ENCODE measurements at regions of chr1 and their contacts with region 1.

Region 1: GRCh38 chr1:91803847-91804545 is 82.0 kb downstream of the TGFBR3 start:
- DNase-seq: peak; percentile 87 to 92 (median 89)
- H3K4me3 ChIP-seq: peak overlapping the region; percentile 27 to 61
- H3K4me3 Mint-ChIP-seq: peak overlapping the region; percentile 73 to 90 (median 80)
- H3K27ac ChIP-seq: peak overlapping the region; percentile 98
- H3K27ac Mint-ChIP-seq: peak overlapping the region; percentile 97 to 100 (median 100)
- H3K4me1 ChIP-seq: peaks cover 49% of the 10 kb centered on the region
- H3K4me1 Mint-ChIP-seq: peaks cover 44 to 66% (median 51%) of the 10 kb centered on the region in 4 donors
- H3K27me3 ChIP-seq: no peaks in the 10 kb centered on the region
- H3K27me3 Mint-ChIP-seq: no peaks in the 10 kb centered on the region

Region 2: GRCh38 chr1:91021686-91022517 is 782.1 kb before region 1 on chr1 and contains the start of gene ZNF644:
- CTCF ChIA-PET with region 1: no interaction called
- POLR2A ChIA-PET with region 1: no interaction called
- intact Hi-C with region 1: loop called (anchors 5 kb)
- DNase-seq: peak; percentile 92 to 98 (median 94)
- H3K4me3 ChIP-seq: peak within 1 kb of the TSS; percentile 57 to 88
- H3K4me3 Mint-ChIP-seq: peak within 1 kb of the TSS; percentile 88 to 96 (median 95)
- H3K27ac ChIP-seq: peak within 1 kb of the TSS; percentile 99
- H3K27ac Mint-ChIP-seq: peak within 1 kb of the TSS; percentile 84 to 99 (median 98)
- H3K4me1 ChIP-seq: peaks cover 56% of the 10 kb centered on the region
- H3K4me1 Mint-ChIP-seq: peaks cover 35 to 72% (median 54%) of the 10 kb centered on the region in 4 donors
- H3K27me3 ChIP-seq: no peaks in the 10 kb centered on the region
- H3K27me3 Mint-ChIP-seq: no peaks in the 10 kb centered on the region
- total RNA-seq, gene ZNF644: 72.7 to 76.3 TPM

Region 3: GRCh38 chr1:91500756-91501522 is 303.1 kb before region 1 on chr1 and contains the start of gene CDC7:
- CTCF ChIA-PET with region 1: no interaction called
- POLR2A ChIA-PET with region 1: no interaction called
- intact Hi-C with region 1: loop called (anchors 2 kb)
- DNase-seq: peak; percentile 69 to 87 (median 81)
- H3K4me3 ChIP-seq: peak within 1 kb of the TSS; percentile 62 to 81
- H3K4me3 Mint-ChIP-seq: no peak within 1 kb of the TSS
- H3K27ac ChIP-seq: peak within 1 kb of the TSS; percentile 75
- H3K27ac Mint-ChIP-seq: no peak within 1 kb of the TSS
- H3K4me1 ChIP-seq: peaks cover 31% of the 10 kb centered on the region
- H3K4me1 Mint-ChIP-seq: peaks cover 18 to 25% (median 21%) of the 10 kb centered on the region in 4 donors
- H3K27me3 ChIP-seq: no peaks in the 10 kb centered on the region
- H3K27me3 Mint-ChIP-seq: no peaks in the 10 kb centered on the region
- total RNA-seq, gene CDC7: 4.7 to 6.0 TPM

Region 4: GRCh38 chr1:91555821-91556531 is 248.0 kb before region 1 on chr1:
- CTCF ChIA-PET with region 1: no interaction called
- POLR2A ChIA-PET with region 1: interaction called, 6 read pairs
- intact Hi-C with region 1: loop called (anchors 1 kb)
- DNase-seq: peak; percentile 85 to 93 (median 88)
- H3K4me3 ChIP-seq: peak overlapping the region in 1 of 2 donors; percentile 19
- H3K4me3 Mint-ChIP-seq: peak overlapping the region in 7 of 8 donors; percentile 29 to 74 (median 65)
- H3K27ac ChIP-seq: peak overlapping the region; percentile 75
- H3K27ac Mint-ChIP-seq: peak overlapping the region; percentile 88 to 99 (median 94)
- H3K4me1 ChIP-seq: peaks cover 98% of the 10 kb centered on the region
- H3K4me1 Mint-ChIP-seq: peaks cover 65 to 97% (median 82%) of the 10 kb centered on the region in 4 donors
- H3K27me3 ChIP-seq: no peaks in the 10 kb centered on the region
- H3K27me3 Mint-ChIP-seq: no peaks in the 10 kb centered on the region

Region 5: DNA sequence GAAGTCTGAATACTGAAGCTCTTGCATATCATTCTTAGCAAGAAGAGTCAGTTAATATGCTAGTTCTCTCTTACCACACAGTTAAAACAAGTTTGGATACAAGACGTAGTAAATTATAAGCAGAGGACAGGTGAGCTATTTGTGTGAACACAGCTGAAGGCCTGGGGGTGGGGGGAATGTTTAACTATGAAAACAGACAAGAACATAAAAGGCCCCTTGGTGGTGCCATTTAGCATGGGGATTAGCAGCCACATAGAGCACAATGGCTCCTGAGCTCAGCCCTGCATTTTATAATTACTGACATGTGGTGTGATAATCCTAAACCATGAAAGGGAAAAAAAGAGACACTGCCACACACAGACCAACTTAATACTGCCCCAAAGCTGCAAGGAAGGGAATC is 12.9 kb before region 1 on chr1:
- CTCF ChIA-PET with region 1: interaction called, 8 read pairs
- POLR2A ChIA-PET with region 1: interaction called, 22 read pairs
- intact Hi-C with region 1: loop called (anchors 1 kb)
- DNase-seq: no peak
- H3K4me3 ChIP-seq: no peak overlapping the region
- H3K4me3 Mint-ChIP-seq: peak overlapping the region in 2 of 8 donors; percentile 47 to 56
- H3K27ac ChIP-seq: no peak overlapping the region
- H3K27ac Mint-ChIP-seq: peak overlapping the region in 3 of 7 donors; percentile 33 to 79 (median 50)
- H3K4me1 ChIP-seq: peaks cover 30% of the 10 kb centered on the region
- H3K4me1 Mint-ChIP-seq: peaks cover 32 to 50% (median 37%) of the 10 kb centered on the region in 4 donors
- H3K27me3 ChIP-seq: no peaks in the 10 kb centered on the region
- H3K27me3 Mint-ChIP-seq: no peaks in the 10 kb centered on the region

Region 6: GRCh38 chr1:91948501-91949355 is 144.7 kb after region 1 on chr1:
- CTCF ChIA-PET with region 1: no interaction called
- POLR2A ChIA-PET with region 1: interaction called, 4 read pairs
- intact Hi-C with region 1: loop called (anchors 1 kb)
- DNase-seq: peak; percentile 84 to 89 (median 87)
- H3K4me3 ChIP-seq: peak overlapping the region; percentile 12 to 21
- H3K4me3 Mint-ChIP-seq: peak overlapping the region; percentile 75 to 92 (median 82)
- H3K27ac ChIP-seq: peak overlapping the region; percentile 73
- H3K27ac Mint-ChIP-seq: peak overlapping the region; percentile 95 to 99 (median 98)
- H3K4me1 ChIP-seq: peaks cover 27% of the 10 kb centered on the region
- H3K4me1 Mint-ChIP-seq: peaks cover 13 to 22% (median 20%) of the 10 kb centered on the region in 4 donors
- H3K27me3 ChIP-seq: no peaks in the 10 kb centered on the region
- H3K27me3 Mint-ChIP-seq: no peaks in the 10 kb centered on the region

Region 7: GRCh38 chr1:92980732-92981647 is 1177.0 kb after region 1 on chr1:
- CTCF ChIA-PET with region 1: no interaction called
- POLR2A ChIA-PET with region 1: no interaction called
- intact Hi-C with region 1: loop called (anchors 10 kb)
- DNase-seq: peak; percentile 81 to 91 (median 87)
- H3K4me3 ChIP-seq: no peak overlapping the region
- H3K4me3 Mint-ChIP-seq: peak overlapping the region; percentile 32 to 86 (median 72)
- H3K27ac ChIP-seq: peak overlapping the region; percentile 77
- H3K27ac Mint-ChIP-seq: peak overlapping the region; percentile 88 to 99 (median 99)
- H3K4me1 ChIP-seq: peaks cover 58% of the 10 kb centered on the region
- H3K4me1 Mint-ChIP-seq: peaks cover 23 to 43% (median 35%) of the 10 kb centered on the region in 4 donors
- H3K27me3 ChIP-seq: no peaks in the 10 kb centered on the region
- H3K27me3 Mint-ChIP-seq: no peaks in the 10 kb centered on the region

Measured in CD4-positive, alpha-beta memory T cell (primary cell).